ENCODE measurements at regions of chr1 and their contacts with region 1.

Region 1: GRCh38 chr1:109181105-109181806 is 32.5 kb upstream of the SARS1 start:
- DNase-seq: no peak
- CTCF ChIP-seq: no peak

Region 2: DNA sequence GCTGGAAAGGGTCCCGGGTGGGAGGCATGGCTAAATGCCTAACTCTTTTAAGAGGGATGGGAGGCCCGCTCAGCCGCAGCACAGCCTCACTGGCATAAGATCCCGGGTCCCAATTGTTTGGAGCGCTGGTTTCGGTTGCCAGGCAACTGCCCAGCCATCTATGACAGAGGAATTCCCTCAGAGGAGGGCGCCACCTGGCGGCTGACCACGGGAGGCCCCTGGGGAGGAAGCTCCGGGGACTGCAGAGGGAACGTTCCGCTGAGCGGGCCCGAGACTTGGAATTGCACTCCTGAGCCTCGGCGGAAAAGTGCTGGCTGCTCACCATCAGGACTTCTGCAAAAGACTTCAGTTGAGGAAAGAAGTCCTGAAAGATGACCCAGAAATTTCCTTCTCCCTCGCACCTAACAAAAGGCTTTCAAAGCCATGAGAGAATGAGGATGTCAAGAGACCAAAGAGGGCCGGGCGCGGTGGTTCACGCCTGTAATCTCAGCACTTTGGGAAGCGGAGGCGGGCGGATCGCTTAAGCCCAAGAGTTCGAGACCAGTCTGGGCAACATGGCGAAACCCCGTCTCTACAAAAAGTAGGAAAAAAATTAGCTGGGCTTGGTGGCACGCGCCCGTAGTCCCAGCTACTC is 68.5 kb before region 1 on chr1:
- in situ Hi-C with region 1: loop called (anchors 10 kb)
- DNase-seq: peak; percentile 84
- CTCF ChIP-seq: peak; percentile 83